Activated CD8-positive, alpha-beta T cell treated with anti-CD3 and anti-CD28 coated beads for 36 hours (primary cell): ENCODE measurements at regions of chr15 and their contacts with region 1.

Region 1: GRCh38 chr15:73633111-73633990 is at the start of gene NPTN:
- DNase-seq: peak; percentile 98
- ATAC-seq: peak; percentile 94
- H3K4me3 Mint-ChIP-seq: peak within 1 kb of the TSS; percentile 75
- H3K27ac Mint-ChIP-seq: peak within 1 kb of the TSS; percentile 71
- H3K4me1 Mint-ChIP-seq: peaks cover 49% of the 10 kb centered on the region
- H3K27me3 Mint-ChIP-seq: peaks cover 12% of the 10 kb centered on the region
- CTCF ChIP-seq: no peak
- total RNA-seq, gene NPTN: 27.4 to 33.6 TPM

Region 2: DNA sequence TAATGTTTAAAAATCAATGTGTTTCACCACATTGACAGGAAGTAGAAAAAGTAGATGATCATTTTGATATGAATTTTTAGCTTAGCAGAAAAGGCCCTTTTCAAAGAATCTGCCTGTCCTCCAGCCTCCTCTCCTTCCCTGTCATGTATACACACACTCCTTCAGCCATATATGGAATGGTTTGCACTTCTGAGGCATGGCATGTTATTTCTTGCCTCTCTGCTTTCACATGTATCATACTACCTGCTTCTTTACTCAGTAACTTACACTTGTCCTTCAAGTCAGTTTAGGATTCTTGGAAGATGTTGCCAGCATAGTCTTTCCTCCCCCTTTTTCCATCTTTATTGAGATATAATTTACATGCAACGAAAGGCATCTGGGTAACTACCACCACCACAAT is 111.3 kb before region 1 on chr15:
- CTCF ChIA-PET with region 1: no interaction called
- POLR2A ChIA-PET with region 1: no interaction called
- intact Hi-C with region 1: no loop called
- DNase-seq: no peak
- ATAC-seq: no peak
- H3K4me3 Mint-ChIP-seq: no peak overlapping the region
- H3K27ac Mint-ChIP-seq: no peak overlapping the region
- H3K4me1 Mint-ChIP-seq: peaks cover 6% of the 10 kb centered on the region
- H3K27me3 Mint-ChIP-seq: no peaks in the 10 kb centered on the region
- CTCF ChIP-seq: no peak

Region 3: GRCh38 chr15:73569370-73569769 is 64.0 kb before region 1 on chr15:
- CTCF ChIA-PET with region 1: interaction called, 11 read pairs
- POLR2A ChIA-PET with region 1: no interaction called
- intact Hi-C with region 1: loop called (anchors 5 kb)
- DNase-seq: no peak
- ATAC-seq: no peak
- H3K4me3 Mint-ChIP-seq: no peak overlapping the region
- H3K27ac Mint-ChIP-seq: peak overlapping the region; percentile 20
- H3K4me1 Mint-ChIP-seq: peaks cover 5% of the 10 kb centered on the region
- H3K27me3 Mint-ChIP-seq: no peaks in the 10 kb centered on the region
- CTCF ChIP-seq: no peak

Region 4: DNA sequence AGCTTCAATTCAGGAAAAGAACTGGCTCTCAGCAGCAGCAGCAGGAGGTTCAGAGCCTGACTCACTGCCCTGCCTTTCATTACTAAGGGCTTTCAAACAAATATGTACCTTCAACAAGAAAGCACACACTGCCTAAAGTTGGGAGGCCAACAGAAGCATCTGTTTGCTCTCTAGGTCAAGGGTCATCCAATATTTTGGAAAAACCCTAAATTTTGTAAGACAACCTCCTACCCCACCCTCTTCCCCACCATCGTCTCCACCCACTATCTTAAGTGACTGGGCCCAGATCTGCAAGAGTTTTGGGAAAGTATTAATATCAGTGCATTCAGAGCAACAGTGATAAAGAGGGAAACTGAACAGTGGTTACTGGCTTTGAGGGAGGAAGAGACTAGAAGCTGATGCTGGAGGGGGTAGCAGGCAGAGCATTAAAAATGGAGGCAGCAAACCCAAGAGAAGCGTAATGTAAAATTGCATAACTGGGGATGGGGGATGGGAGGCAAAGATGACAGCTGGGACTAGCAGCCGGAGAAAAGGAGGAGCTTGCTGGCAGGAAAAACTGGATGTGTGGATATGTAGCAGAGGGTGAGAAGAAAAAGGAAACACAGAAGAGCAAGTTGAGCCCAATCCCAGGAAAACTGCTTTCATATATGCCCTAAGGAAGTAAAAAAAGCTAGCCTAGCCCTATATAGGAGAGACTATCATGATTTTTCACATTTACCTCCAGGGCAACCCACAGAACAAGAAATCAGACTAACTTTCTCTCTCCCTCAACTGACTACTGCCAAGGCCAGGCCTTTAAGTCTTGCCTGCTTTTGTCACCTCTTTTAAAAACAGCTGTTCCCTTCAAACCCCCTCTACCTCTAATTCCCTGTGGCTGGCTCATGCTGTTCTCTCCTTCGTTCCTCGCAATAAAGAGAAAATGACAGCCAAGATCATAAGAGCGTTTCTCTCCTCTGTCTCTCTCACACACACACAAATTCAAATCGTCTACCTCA is 31.6 kb before region 1 on chr15:
- CTCF ChIA-PET with region 1: interaction called, 21 read pairs
- POLR2A ChIA-PET with region 1: interaction called, 3 read pairs
- intact Hi-C with region 1: no loop called
- DNase-seq: no peak
- ATAC-seq: no peak
- H3K4me3 Mint-ChIP-seq: no peak overlapping the region
- H3K27ac Mint-ChIP-seq: no peak overlapping the region
- H3K4me1 Mint-ChIP-seq: peaks cover 19% of the 10 kb centered on the region
- H3K27me3 Mint-ChIP-seq: no peaks in the 10 kb centered on the region
- CTCF ChIP-seq: no peak

Region 5: GRCh38 chr15:73617301-73617831 is 16.0 kb before region 1 on chr15:
- CTCF ChIA-PET with region 1: interaction called, 66 read pairs
- POLR2A ChIA-PET with region 1: interaction called, 7 read pairs
- intact Hi-C with region 1: no loop called
- DNase-seq: no peak
- ATAC-seq: no peak
- H3K4me3 Mint-ChIP-seq: no peak overlapping the region
- H3K27ac Mint-ChIP-seq: no peak overlapping the region
- H3K4me1 Mint-ChIP-seq: peaks cover 55% of the 10 kb centered on the region
- H3K27me3 Mint-ChIP-seq: no peaks in the 10 kb centered on the region
- CTCF ChIP-seq: no peak

Region 6: DNA sequence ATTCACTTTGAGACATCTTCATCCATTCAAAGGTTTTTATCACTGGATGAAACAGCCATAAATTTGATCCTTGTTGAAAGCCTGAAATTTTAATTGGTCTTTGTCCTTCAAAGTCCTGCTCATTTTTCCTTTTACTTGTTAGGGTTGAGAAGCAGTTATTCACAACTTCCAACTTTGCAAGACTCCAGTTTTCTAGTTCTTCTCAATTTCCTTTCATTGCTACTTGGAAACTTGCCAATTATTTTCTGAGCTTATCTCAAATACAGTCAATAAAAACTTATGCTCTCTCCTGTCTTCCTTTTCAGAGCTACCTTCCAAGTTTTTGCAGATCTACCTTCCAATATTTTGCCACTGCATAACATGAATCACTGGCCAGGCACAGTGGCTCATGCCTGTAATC is 27.1 kb after region 1 on chr15:
- CTCF ChIA-PET with region 1: interaction called, 26 read pairs
- POLR2A ChIA-PET with region 1: no interaction called
- intact Hi-C with region 1: no loop called
- DNase-seq: no peak
- ATAC-seq: no peak
- H3K4me3 Mint-ChIP-seq: no peak overlapping the region
- H3K27ac Mint-ChIP-seq: no peak overlapping the region
- H3K4me1 Mint-ChIP-seq: peaks cover 3% of the 10 kb centered on the region
- H3K27me3 Mint-ChIP-seq: peaks cover 24% of the 10 kb centered on the region
- CTCF ChIP-seq: no peak

Region 7: DNA sequence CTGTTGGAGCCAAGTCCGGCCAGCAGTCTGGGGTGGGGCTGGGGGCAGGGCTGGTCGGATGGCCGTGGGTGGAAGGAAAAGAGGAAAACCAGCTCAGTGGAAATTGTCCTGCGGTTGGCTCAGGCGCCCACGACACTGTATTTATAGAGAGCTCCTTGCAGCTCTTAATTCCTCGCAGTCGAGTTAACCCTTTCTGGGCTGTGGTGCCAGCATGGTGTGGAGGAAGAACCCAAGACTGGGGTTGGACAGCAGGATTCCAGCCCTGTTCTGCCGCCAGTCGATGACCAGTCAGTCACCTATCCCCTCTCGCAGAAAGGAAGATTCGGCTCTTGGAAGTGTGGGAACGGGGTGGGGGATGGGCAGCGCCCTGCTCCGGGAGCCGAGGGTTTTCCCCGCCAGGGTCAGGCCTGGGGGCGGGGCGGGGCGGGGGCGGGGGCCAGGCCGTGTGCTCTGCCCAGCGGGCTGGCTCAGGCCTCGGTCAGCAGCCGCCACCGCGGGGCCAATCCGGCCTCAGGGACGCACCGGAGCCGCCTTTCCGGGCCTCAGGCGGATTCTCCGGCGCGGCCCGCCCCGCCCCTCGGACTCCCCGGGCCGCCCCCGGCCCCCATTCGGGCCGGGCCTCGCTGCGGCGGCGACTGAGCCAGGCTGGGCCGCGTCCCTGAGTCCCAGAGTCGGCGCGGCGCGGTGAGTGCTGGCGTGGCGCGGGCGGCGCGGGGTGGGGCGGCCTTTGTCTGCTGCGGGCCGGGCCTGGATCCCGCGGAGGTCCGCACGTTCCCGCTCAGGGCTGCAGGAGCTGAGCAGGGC is 50.6 kb after region 1 on chr15 and contains the start of gene CD276:
- CTCF ChIA-PET with region 1: interaction called, 54 read pairs
- POLR2A ChIA-PET with region 1: no interaction called
- intact Hi-C with region 1: no loop called
- DNase-seq: peak; percentile 19
- ATAC-seq: peak; percentile 53
- H3K4me3 Mint-ChIP-seq: peak within 1 kb of the TSS; percentile 50
- H3K27ac Mint-ChIP-seq: no peak within 1 kb of the TSS
- H3K4me1 Mint-ChIP-seq: peaks cover 16% of the 10 kb centered on the region
- H3K27me3 Mint-ChIP-seq: peaks cover 55% of the 10 kb centered on the region
- CTCF ChIP-seq: no peak
- total RNA-seq, gene CD276: 0.31 to 0.45 TPM